Common myeloid progenitor, CD34-positive (primary cell): ENCODE measurements at regions of chr3 and their contacts with region 1.

Region 1: DNA sequence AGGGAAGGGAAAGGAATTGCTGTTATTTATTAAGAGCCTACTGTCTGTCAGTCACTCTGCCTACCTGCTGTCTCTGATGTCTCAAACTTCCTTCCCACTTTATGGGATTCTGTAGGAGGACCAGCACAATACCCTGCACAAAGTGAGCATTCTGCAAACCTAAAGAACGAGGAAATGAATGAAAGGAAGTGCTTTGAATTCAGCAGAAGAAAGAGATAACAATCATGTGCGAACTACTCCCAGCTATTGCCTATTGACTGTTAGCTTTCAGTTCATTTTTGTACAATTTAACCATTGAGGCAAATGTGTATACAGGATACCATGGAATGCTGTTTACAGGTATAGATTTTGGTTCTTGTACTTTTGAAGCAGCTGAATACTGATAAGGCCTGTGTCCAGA is 66.8 kb downstream of the CMSS1 start:
- DNase-seq: no peak
- H3K4me3 ChIP-seq: no peak overlapping the region
- H3K27ac ChIP-seq: no peak overlapping the region
- H3K4me1 ChIP-seq: peaks cover 0 to 10% (median 5%) of the 10 kb centered on the region in 4 experiments
- H3K27me3 ChIP-seq: no peaks in the 10 kb centered on the region

Region 2: DNA sequence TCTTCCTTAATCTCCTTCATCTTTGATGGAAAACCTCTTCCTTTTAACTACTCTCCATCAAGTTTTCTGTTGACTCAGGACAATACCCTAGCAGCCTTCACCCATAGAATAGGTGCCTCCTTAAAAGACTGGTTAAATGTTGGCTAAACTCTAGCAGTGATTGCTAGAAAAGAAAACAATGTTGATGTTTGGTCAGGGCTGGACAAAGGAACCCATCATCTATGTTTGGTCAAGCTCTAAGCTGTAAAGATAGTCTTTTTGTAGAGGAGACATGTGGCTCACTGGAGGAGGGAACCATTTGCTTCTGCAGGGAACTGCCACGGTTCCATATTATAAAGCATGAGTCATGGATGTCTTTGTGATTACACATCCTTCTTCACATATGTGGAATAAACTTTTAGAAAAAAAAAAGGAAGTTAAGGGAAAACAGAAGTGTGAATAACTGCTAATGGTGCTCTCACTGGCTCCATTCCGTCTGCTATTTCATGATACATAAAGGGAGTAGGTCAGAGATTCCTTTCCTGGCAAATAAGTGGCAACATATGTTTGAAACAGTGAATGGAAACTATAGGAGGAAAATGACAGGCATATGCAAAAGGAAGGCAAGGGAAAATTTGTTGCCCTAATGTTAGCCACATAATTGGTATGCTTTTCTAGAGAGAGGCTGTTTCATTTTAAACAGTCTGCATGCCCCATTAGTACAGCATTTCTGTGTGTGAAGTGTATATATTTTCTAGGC is 11.4 kb after region 1 on chr3:
- CTCF ChIA-PET with region 1: interaction called, 13 read pairs
- POLR2A ChIA-PET with region 1: no interaction called
- DNase-seq: peak; percentile 56 to 91 (median 87)
- H3K4me3 ChIP-seq: peak overlapping the region in 3 of 7 experiments; percentile 21 to 55 (median 37)
- H3K27ac ChIP-seq: peak overlapping the region in 1 of 2 experiments; percentile 56
- H3K4me1 ChIP-seq: peaks cover 9 to 37% (median 19%) of the 10 kb centered on the region in 4 experiments
- H3K27me3 ChIP-seq: no peaks in the 10 kb centered on the region

Region 3: GRCh38 chr3:99907959-99908544 is 23.6 kb after region 1 on chr3:
- CTCF ChIA-PET with region 1: no interaction called
- POLR2A ChIA-PET with region 1: no interaction called
- DNase-seq: no peak
- H3K4me3 ChIP-seq: no peak overlapping the region
- H3K27ac ChIP-seq: no peak overlapping the region
- H3K4me1 ChIP-seq: no peaks in the 10 kb centered on the region
- H3K27me3 ChIP-seq: no peaks in the 10 kb centered on the region

Region 4: DNA sequence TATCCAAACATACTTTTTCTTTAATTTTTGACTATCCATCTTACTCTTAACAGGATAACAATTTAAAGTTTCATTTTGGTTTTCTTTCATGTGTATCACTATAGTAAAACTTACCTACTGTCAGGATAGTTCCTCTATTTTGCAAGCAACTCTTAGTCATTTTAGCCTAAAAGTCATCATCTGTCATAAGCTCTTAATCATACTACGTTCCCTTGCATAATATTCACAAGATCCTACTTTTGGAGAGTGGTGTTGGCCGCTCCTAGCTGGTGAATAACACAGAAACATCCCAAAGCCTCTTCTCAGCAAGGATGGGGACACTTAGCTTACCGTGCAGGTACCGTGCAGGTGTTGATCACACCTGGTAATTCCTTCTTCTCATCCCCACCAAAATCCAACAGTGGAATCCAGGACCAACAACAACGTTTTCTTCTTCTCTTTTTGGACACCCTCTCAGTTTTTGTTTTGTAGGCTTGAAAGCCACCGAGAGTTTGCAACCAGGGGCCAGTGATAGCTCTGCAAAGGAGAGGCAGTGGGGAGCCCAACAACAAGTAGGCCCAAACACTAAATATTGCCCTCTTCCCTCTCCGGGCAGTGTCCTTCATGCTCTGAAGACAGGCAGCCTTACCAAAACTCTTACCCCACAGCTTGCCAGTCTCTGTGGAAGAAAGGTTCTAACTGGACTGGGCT is 229.4 kb after region 1 on chr3:
- CTCF ChIA-PET with region 1: no interaction called
- POLR2A ChIA-PET with region 1: no interaction called
- DNase-seq: peak in 2 of 3 donors; percentile 33 to 44
- H3K4me3 ChIP-seq: no peak overlapping the region
- H3K27ac ChIP-seq: no peak overlapping the region
- H3K4me1 ChIP-seq: no peaks in the 10 kb centered on the region
- H3K27me3 ChIP-seq: no peaks in the 10 kb centered on the region

Region 5: GRCh38 chr3:100216713-100217112 is 332.2 kb after region 1 on chr3:
- CTCF ChIA-PET with region 1: no interaction called
- POLR2A ChIA-PET with region 1: no interaction called
- DNase-seq: no peak
- H3K4me3 ChIP-seq: no peak overlapping the region
- H3K27ac ChIP-seq: no peak overlapping the region
- H3K4me1 ChIP-seq: no peaks in the 10 kb centered on the region
- H3K27me3 ChIP-seq: no peaks in the 10 kb centered on the region